Activated CD4-positive, alpha-beta T cell treated with anti-CD3 and anti-CD28 coated beads for 36 hours (primary cell): ENCODE measurements at regions of chr2 and their contacts with region 1.

Region 1: DNA sequence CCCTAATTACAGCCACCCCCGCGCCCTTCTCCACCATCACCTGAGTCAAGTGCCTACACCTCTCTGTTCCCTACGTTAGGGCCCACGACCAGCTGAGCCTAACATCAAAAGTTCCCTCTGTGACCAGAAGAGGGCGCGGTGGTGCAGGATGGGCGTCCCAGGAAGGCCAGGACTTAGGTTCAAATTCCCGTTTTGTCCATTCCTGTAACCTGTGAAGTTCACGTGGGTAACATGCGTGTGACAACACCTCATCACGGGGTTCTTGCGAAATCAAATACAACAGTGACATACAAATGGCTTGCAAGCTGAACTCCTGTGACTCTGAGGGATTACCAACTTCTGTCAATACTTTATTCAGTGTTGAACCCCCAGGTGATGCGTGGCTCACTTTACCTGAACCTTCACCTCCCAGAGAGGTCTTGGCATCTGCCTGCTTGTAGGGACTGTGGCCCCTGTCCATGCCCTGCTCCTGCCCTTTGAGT is 207.9 kb downstream of the ARL4C start:
- DNase-seq: peak; percentile 87
- ATAC-seq: peak; percentile 2
- H3K4me3 Mint-ChIP-seq: peak overlapping the region; percentile 54
- H3K27ac Mint-ChIP-seq: peak overlapping the region; percentile 98
- H3K4me1 Mint-ChIP-seq: peaks cover 74% of the 10 kb centered on the region
- H3K27me3 Mint-ChIP-seq: no peaks in the 10 kb centered on the region

Region 2: DNA sequence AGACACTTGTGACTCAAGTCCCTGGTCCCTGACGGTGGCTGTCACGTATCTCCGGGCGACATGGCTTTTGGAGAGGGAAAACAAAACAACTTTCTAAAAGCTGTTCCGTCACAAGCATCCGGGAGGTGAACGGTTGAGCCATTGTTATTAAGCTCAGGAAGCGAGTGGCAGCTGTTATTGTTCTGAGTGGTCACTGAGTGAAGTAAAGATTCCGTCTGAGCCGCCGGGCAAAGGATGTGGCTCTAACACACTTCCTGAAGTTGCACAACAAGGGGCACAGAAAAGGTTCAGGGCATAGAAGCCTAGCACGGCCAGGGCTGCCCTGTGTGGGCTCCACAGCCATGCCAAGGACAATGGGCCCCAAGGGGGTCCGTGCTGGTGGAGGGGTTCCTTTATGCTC is 1204.5 kb before region 1 on chr2:
- CTCF ChIA-PET with region 1: no interaction called
- POLR2A ChIA-PET with region 1: no interaction called
- intact Hi-C with region 1: loop called in 1 of 2 experiments (anchors 10 kb)
- DNase-seq: peak; percentile 72
- ATAC-seq: peak; percentile 5
- H3K4me3 Mint-ChIP-seq: peak overlapping the region; percentile 50
- H3K27ac Mint-ChIP-seq: peak overlapping the region; percentile 87
- H3K4me1 Mint-ChIP-seq: peaks cover 79% of the 10 kb centered on the region
- H3K27me3 Mint-ChIP-seq: no peaks in the 10 kb centered on the region

Region 3: DNA sequence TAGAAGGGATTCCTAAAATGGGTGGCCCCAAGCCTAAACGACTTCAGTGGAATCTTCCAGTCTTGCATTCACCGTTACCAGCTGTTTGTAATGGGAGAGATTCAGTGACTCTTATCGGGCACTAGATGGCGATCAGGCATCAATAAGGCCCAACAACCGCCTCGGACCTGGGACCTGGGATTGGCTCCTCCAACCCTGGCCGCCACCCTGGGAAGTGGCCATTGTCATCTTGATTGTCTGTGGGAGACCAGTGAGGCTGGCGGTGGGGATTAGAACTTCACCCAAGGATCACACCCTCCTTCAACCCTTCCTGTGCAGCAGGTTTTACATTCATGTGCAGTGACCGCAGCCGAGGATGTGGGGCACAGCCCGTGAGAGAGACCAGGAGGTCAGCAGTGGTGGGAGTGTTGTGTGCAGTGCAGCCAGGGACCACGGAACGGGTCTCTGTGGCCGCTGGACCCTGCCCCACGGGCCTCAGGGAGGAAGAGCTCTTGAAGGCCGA is 153.2 kb before region 1 on chr2:
- CTCF ChIA-PET with region 1: interaction called, 5 read pairs
- POLR2A ChIA-PET with region 1: no interaction called
- intact Hi-C with region 1: loop called (anchors 1 to 2 kb)
- DNase-seq: peak; percentile 72
- ATAC-seq: peak; percentile 87
- H3K4me3 Mint-ChIP-seq: no peak overlapping the region
- H3K27ac Mint-ChIP-seq: no peak overlapping the region
- H3K4me1 Mint-ChIP-seq: peaks cover 23% of the 10 kb centered on the region
- H3K27me3 Mint-ChIP-seq: no peaks in the 10 kb centered on the region

Region 4: DNA sequence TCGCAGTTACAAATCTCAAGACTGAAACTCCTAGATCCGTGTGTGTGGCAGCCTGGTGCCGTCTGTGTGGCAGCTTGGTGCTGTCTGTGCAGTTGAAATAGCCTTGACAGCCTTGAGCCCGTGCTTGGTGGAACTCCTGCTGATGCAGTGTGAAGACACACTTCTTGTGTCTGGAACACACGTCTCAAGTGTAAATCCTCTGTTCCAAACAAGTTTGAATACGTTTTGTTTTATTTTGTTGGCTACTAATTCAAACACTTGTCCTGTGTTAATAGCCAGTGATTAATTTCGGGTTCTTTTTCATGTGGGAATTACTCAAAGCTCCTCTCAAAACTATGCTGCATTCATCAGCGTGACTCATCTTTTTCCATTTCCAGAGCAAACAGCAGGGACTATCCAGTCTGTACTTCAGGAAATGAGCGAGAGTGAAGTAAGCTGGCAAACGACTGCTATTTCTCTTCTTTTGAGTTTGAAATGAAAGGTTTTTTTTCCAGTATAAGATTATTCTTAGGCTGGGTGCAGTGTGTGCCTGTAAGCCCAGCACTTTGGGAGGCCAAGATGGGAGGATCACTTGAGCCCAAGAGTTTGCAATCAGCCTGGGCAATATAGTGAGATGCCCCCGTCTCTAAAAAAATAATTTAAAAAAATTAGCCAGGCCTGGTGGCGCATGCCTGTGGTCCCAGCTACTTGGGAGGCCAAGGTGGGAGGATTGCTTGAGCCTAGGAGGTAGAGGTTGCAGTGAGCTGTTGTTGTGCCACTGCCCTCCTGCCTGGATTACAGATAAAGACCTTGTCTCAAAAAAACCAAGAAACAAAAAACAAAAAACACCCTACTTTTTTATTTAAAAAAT is 85.7 kb before region 1 on chr2:
- CTCF ChIA-PET with region 1: no interaction called
- POLR2A ChIA-PET with region 1: no interaction called
- intact Hi-C with region 1: no loop called
- DNase-seq: peak; percentile 35
- ATAC-seq: peak; percentile 73
- H3K4me3 Mint-ChIP-seq: no peak overlapping the region
- H3K27ac Mint-ChIP-seq: peak overlapping the region; percentile 2
- H3K4me1 Mint-ChIP-seq: peaks cover 7% of the 10 kb centered on the region
- H3K27me3 Mint-ChIP-seq: no peaks in the 10 kb centered on the region

Region 5: GRCh38 chr2:234231460-234231859 is 57.6 kb before region 1 on chr2:
- CTCF ChIA-PET with region 1: no interaction called
- POLR2A ChIA-PET with region 1: no interaction called
- intact Hi-C with region 1: no loop called
- DNase-seq: no peak
- ATAC-seq: no peak
- H3K4me3 Mint-ChIP-seq: no peak overlapping the region
- H3K27ac Mint-ChIP-seq: no peak overlapping the region
- H3K4me1 Mint-ChIP-seq: no peaks in the 10 kb centered on the region
- H3K27me3 Mint-ChIP-seq: no peaks in the 10 kb centered on the region

Region 6: GRCh38 chr2:234300932-234301823 is 12.2 kb after region 1 on chr2:
- CTCF ChIA-PET with region 1: interaction called, 14 read pairs
- POLR2A ChIA-PET with region 1: interaction called, 3 read pairs
- intact Hi-C with region 1: no loop called
- DNase-seq: no peak
- ATAC-seq: no peak
- H3K4me3 Mint-ChIP-seq: peak overlapping the region; percentile 3
- H3K27ac Mint-ChIP-seq: peak overlapping the region; percentile 37
- H3K4me1 Mint-ChIP-seq: peaks cover 76% of the 10 kb centered on the region
- H3K27me3 Mint-ChIP-seq: no peaks in the 10 kb centered on the region

Region 7: DNA sequence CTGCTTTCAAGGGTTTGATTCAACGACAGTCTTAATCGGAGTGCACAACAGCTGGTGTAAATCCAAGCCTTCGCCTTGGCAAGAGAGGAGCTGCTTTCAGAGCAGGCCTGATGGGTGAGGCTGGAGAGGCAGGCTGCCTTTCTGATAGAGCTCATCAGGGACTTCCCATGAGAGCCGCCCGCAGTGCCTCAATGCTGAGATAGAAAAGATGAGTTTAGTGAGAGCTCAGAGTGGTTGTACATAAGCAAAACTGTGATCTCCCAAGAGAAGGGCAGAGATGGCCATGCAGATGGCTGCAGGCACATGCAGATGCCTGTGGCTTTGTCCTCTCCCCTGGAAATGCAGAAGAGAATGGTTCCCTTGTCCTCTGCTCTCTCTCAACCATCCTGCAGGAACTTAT is 85.7 kb after region 1 on chr2:
- CTCF ChIA-PET with region 1: interaction called, 13 read pairs
- POLR2A ChIA-PET with region 1: interaction called, 11 read pairs
- intact Hi-C with region 1: loop called (anchors 2 to 5 kb)
- DNase-seq: no peak
- ATAC-seq: no peak
- H3K4me3 Mint-ChIP-seq: no peak overlapping the region
- H3K27ac Mint-ChIP-seq: no peak overlapping the region
- H3K4me1 Mint-ChIP-seq: peaks cover 68% of the 10 kb centered on the region
- H3K27me3 Mint-ChIP-seq: no peaks in the 10 kb centered on the region

Region 8: GRCh38 chr2:234463626-234464290 is 174.7 kb after region 1 on chr2:
- CTCF ChIA-PET with region 1: interaction called, 6 read pairs
- POLR2A ChIA-PET with region 1: interaction called, 7 read pairs
- intact Hi-C with region 1: loop called (anchors 1 kb)
- DNase-seq: peak; percentile 85
- ATAC-seq: peak; percentile 82
- H3K4me3 Mint-ChIP-seq: peak overlapping the region; percentile 56
- H3K27ac Mint-ChIP-seq: peak overlapping the region; percentile 81
- H3K4me1 Mint-ChIP-seq: peaks cover 76% of the 10 kb centered on the region
- H3K27me3 Mint-ChIP-seq: no peaks in the 10 kb centered on the region

Region 9: DNA sequence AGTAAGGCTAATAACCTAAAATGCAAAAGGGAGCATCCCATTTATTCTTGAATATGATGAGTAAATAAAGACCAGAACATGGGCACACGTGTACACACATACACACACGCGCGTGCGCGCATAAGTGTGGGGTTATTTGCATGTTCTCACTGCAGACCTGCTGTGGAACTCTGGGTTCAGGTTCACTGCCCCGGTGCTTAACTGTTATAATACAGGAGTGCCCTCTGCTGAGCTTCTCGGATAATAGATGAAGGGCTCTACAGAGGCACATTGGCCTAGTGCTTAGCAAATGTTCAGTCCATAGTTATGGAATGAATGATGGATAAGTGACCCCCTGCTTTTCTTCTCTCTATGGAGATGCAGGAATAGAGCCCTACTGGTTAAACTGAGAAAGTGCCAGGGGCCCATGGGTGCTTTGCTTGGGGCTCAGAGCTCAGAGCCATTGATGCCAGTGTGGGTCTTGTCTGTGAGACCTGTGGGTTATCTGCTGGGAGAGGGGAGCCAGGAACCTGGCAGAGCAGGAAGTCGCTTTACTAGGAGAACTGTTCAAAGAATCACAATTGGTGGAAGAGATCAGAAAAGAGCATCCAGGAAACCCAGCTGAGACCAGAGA is 211.5 kb after region 1 on chr2:
- CTCF ChIA-PET with region 1: interaction called, 19 read pairs
- POLR2A ChIA-PET with region 1: interaction called, 6 read pairs
- intact Hi-C with region 1: loop called in 1 of 2 experiments (anchors 1 kb)
- DNase-seq: peak; percentile 81
- ATAC-seq: peak; percentile 69
- H3K4me3 Mint-ChIP-seq: no peak overlapping the region
- H3K27ac Mint-ChIP-seq: peak overlapping the region; percentile 32
- H3K4me1 Mint-ChIP-seq: peaks cover 27% of the 10 kb centered on the region
- H3K27me3 Mint-ChIP-seq: no peaks in the 10 kb centered on the region